CD4-positive, alpha-beta T cell (primary cell): ENCODE measurements at regions of chr10 and their contacts with region 1.

Region 1: DNA sequence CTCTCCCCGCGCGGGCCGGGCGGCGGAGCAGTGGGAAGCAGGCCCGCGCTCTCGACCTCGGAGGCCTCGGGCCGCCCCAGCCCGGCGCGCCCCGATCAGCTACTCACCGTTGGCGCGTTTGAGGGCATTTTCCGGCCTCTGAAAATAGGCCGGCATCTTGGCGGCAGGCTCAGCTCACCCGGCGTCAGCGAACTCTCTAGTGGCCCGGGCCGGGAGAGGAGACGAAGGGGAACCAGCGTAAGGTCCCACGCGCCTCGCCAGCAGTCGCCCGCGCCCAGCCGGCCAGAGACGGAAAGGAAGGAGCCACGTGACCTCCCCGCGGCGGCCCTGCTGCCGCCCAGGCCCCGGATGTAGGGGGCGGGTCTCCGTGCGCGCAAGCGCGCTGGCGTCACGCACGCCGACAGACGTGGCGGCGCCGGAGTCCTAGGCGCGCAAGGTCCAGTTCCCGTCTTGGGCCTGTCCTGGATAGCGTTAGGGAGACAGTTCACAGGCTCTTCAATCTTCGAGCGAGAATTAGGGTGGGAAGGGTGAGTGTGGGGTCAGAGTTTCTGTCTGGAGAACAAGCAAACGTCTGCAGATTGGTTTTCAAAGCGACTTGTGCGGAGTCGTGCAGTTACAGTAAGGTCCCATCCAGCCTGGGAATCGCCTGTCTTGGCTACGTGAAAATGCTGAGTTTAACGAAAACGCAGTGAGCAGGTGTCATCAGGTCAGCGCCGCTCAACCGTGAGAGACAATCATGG is at the start of gene EIF3A:
- DNase-seq: peak; percentile 82 to 96 (median 88)
- ATAC-seq: peak; percentile 69
- H3K4me3 ChIP-seq: peak within 1 kb of the TSS; percentile 99
- H3K4me3 Mint-ChIP-seq: peak within 1 kb of the TSS; percentile 100
- H3K27ac ChIP-seq: peak within 1 kb of the TSS; percentile 92 to 96
- H3K27ac Mint-ChIP-seq: peak within 1 kb of the TSS; percentile 99
- H3K4me1 ChIP-seq: peaks cover 33% of the 10 kb centered on the region
- H3K4me1 Mint-ChIP-seq: peaks cover 64% of the 10 kb centered on the region
- H3K27me3 ChIP-seq: no peaks in the 10 kb centered on the region
- H3K27me3 Mint-ChIP-seq: no peaks in the 10 kb centered on the region
- CTCF ChIP-seq: no peak
- total RNA-seq, gene EIF3A: 129 TPM

Region 2: DNA sequence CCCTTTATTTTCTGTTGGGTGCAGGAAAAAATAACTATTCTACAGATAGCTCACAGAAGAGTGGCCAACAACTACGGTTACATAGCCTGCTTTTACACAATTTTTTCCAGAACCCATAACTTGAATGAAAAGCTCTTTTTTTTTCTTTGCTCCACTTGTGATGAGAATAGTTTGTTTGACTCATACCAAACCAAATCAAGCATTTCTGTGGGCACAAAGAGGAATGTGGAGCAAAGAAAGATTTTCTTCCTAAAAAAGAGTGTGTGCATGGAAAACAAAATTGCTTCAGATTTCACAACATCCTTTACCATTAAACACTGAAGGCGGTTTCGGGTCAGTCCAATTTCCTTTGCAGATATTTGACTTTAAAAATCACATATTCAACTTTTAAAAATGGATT is 979.2 kb before region 1 on chr10:
- CTCF ChIA-PET with region 1: no interaction called
- POLR2A ChIA-PET with region 1: no interaction called
- intact Hi-C with region 1: no loop called
- DNase-seq: no peak
- ATAC-seq: no peak
- H3K4me3 ChIP-seq: no peak overlapping the region
- H3K4me3 Mint-ChIP-seq: no peak overlapping the region
- H3K27ac ChIP-seq: no peak overlapping the region
- H3K27ac Mint-ChIP-seq: no peak overlapping the region
- H3K4me1 ChIP-seq: no peaks in the 10 kb centered on the region
- H3K4me1 Mint-ChIP-seq: no peaks in the 10 kb centered on the region
- H3K27me3 ChIP-seq: peaks cover 0 to 7% of the 10 kb centered on the region in 2 experiments
- H3K27me3 Mint-ChIP-seq: peaks cover 11% of the 10 kb centered on the region
- CTCF ChIP-seq: no peak

Region 3: DNA sequence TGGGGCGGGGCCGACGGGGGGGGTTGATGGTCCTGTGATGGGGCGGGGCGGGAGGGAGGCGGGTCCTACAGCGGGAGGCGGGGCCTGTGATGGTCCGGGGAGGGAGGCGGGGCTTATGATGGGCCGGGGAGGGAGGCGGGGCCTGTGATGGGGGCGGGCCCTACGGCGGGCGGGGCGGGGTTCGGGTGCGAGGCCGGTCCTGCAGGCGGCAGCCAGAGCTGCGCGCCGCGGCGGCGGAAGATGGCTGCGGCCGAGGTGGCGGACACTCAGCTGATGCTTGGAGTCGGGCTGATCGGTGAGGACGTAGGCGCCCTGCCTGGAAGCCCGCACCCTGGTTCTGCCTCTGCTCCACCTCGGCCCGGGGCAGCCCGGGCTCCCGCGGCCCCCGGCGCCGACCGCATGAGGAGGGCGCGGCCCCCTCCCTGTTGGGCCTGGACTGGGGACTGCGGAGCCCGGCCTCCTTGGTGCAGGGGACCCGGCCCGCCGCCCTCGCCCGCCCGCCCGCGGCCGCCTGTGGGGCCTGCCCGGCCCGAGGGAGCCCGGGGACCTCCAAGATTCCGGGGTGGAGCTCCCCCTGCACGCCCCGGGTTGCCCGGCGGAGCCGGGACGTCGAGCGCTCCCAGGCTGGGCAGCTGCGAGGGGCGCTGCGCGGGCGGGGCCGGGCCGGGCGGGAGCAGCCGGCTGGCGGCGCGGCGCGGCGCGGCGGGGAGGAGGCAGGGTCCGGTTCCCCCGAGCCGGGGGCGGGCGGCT is 23.4 kb after region 1 on chr10 and contains the start of gene DENND10:
- CTCF ChIA-PET with region 1: interaction called, 6 read pairs
- POLR2A ChIA-PET with region 1: interaction called, 40 read pairs
- intact Hi-C with region 1: loop called in 1 of 2 experiments (anchors 1 kb)
- DNase-seq: peak; percentile 51 to 90 (median 71)
- ATAC-seq: peak; percentile 77
- H3K4me3 ChIP-seq: peak within 1 kb of the TSS; percentile 66
- H3K4me3 Mint-ChIP-seq: peak within 1 kb of the TSS; percentile 95
- H3K27ac ChIP-seq: peak within 1 kb of the TSS in 1 of 2 donors; percentile 40
- H3K27ac Mint-ChIP-seq: peak within 1 kb of the TSS; percentile 94
- H3K4me1 ChIP-seq: peaks cover 26% of the 10 kb centered on the region
- H3K4me1 Mint-ChIP-seq: peaks cover 13% of the 10 kb centered on the region
- H3K27me3 ChIP-seq: no peaks in the 10 kb centered on the region
- H3K27me3 Mint-ChIP-seq: no peaks in the 10 kb centered on the region
- CTCF ChIP-seq: no peak
- total RNA-seq, gene DENND10: 40.4 to 45.6 TPM

Region 4: GRCh38 chr10:119178372-119179119 is 97.9 kb after region 1 on chr10 and contains the start of gene PRDX3:
- CTCF ChIA-PET with region 1: no interaction called
- POLR2A ChIA-PET with region 1: interaction called, 4 read pairs
- intact Hi-C with region 1: loop called in 1 of 2 experiments (anchors 2 kb)
- DNase-seq: peak; percentile 85 to 96 (median 91)
- ATAC-seq: peak; percentile 97
- H3K4me3 ChIP-seq: peak within 1 kb of the TSS; percentile 93
- H3K4me3 Mint-ChIP-seq: peak within 1 kb of the TSS; percentile 98
- H3K27ac ChIP-seq: peak within 1 kb of the TSS; percentile 71 to 80
- H3K27ac Mint-ChIP-seq: peak within 1 kb of the TSS; percentile 95
- H3K4me1 ChIP-seq: peaks cover 32% of the 10 kb centered on the region
- H3K4me1 Mint-ChIP-seq: peaks cover 35% of the 10 kb centered on the region
- H3K27me3 ChIP-seq: no peaks in the 10 kb centered on the region
- H3K27me3 Mint-ChIP-seq: no peaks in the 10 kb centered on the region
- CTCF ChIP-seq: peak; percentile 19
- total RNA-seq, gene PRDX3: 7.1 to 7.5 TPM